ENCODE measurements at regions of chr6 and their contacts with region 1.

Region 1: GRCh38 chr6:53794720-53795253 is at the start of gene LRRC1:
- DNase-seq: peak; percentile 87
- H3K4me3 Mint-ChIP-seq: peak within 1 kb of the TSS; percentile 88
- H3K27ac Mint-ChIP-seq: peak within 1 kb of the TSS; percentile 74
- H3K4me1 Mint-ChIP-seq: peaks cover 25% of the 10 kb centered on the region
- H3K27me3 Mint-ChIP-seq: peaks cover 46% of the 10 kb centered on the region
- total RNA-seq, gene LRRC1: 1.9 and 3.4 TPM in 2 replicates

Region 2: DNA sequence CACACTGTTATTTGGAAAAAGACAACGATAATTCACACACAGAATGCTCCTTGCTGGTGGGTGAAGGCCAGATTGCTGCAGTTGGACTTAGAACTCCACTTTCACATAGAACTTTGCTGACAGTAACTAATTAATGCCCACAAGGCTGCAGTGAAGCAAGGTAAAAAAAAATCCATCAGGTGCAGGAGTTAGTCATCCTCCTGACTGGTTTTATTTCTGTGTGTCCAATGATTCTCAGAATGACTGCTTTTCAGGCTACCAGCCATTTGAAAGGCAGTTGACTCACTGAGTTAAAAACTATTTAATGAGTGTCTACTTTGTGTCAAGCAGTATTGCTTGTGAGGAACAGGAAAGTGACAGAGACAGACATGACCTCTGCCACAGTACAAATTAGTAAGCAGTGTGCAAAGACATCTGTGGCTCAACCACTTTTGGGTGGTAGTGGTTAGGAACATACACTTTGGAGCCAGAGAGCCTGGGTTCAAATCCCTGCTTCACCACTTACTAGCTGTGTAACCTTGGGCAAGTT is 487.9 kb before region 1 on chr6:
- intact Hi-C with region 1: no loop called
- DNase-seq: no peak
- H3K4me3 Mint-ChIP-seq: no peak overlapping the region
- H3K27ac Mint-ChIP-seq: peak overlapping the region; percentile 71
- H3K4me1 Mint-ChIP-seq: peaks cover 79% of the 10 kb centered on the region
- H3K27me3 Mint-ChIP-seq: no peaks in the 10 kb centered on the region

Region 3: GRCh38 chr6:53734473-53735299 is 60.1 kb before region 1 on chr6:
- intact Hi-C with region 1: loop called (anchors 2 kb)
- DNase-seq: peak; percentile 32
- H3K4me3 Mint-ChIP-seq: peak overlapping the region; percentile 30
- H3K27ac Mint-ChIP-seq: peak overlapping the region; percentile 24
- H3K4me1 Mint-ChIP-seq: peaks cover 44% of the 10 kb centered on the region
- H3K27me3 Mint-ChIP-seq: no peaks in the 10 kb centered on the region

Region 4: DNA sequence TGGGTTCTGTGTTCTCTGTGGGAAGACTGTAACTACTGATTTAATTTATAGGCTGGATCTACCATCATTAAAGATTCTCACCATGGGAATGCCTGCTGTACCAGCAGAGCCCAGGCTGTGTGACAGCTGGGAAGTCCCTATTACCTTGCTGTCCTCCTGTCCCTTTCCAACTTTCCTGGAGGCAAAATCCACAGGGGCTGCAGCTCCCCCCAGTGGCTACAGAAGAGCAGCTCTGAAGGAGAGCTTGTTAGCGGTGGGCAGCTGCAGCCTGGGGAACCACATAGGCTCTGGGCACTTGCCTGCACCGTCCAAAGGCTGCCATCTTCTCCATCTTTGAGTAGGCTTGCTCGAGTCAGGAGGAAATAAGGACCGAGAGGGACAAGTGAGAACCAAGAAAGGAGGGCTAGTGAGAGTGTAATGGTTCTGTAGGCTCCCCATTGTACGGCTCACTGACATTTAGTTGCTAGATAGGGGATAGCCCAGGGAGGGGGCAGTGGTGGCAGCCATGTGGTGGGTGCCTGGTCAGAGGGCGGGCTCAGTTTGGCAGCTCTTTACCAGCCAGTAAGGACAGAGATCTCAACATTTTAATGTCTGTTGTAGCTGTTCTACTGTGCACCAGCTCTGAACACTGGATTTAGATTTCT is 161.4 kb after region 1 on chr6:
- intact Hi-C with region 1: loop called (anchors 10 kb)
- DNase-seq: no peak
- H3K4me3 Mint-ChIP-seq: no peak overlapping the region
- H3K27ac Mint-ChIP-seq: no peak overlapping the region
- H3K4me1 Mint-ChIP-seq: no peaks in the 10 kb centered on the region
- H3K27me3 Mint-ChIP-seq: peaks cover 11% of the 10 kb centered on the region

Measured in activated T-helper 2 cell treated with anti-CD3 and anti-CD28 coated beads, Interferon-gamma antibody, Interleukin-2, Interleukin-4, amounts not matched to agents 10 μg/mL and 5 μg/mL and 100 μg/mL, durations not matched to agents 14 hours and 24 hours and 36 hours (primary cell).